ENCODE measurements at regions of chr2 and their contacts with region 1.

Region 1: DNA sequence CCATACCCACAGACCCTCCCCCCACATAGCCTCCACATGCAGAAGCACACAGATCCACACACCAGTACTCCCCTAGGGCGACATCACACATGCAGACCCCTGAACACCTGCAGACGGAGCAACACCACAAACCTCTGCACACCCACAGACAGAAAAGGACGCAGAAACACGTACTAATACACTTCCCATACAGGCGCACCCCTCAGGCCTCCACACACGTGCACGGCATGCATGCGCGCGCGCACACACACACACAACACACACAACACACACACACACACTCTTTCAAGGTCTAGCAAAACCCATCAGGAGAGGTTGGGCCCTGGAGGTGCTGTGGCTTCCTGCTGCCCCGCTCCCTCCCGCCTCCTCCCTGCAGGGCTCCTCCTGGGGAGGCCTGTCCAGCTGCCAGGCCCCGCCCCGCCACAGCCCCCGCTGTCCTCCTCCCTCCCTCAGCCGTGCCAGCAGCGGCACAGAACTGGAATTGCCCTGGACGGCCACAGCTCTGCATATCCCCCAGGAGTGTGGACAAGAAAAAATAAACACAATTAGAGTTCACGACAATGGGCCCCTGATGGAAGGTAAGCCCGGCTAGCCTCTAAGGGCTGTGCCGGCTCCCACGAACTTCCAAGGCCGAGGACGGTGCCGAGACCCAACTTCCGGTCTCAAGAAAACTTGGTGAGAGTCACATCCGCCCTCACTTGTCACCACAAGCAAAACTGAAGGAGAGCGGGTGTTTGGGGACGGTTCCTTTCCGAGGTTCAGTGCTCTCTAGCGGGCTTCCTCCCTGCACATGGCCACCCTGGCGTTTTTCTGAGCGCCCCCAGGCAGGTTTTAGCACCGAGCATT is 6.8 kb downstream of the ZFP36L2 start:
- DNase-seq: peak; percentile 95
- H3K4me3 ChIP-seq: peak overlapping the region in 3 of 4 donors; percentile 85 to 91 (median 90)
- H3K27ac ChIP-seq: peak overlapping the region; percentile 96 to 100 (median 99)
- H3K4me1 ChIP-seq: peaks cover 17 to 54% (median 47%) of the 10 kb centered on the region in 4 donors
- H3K27me3 ChIP-seq: no peaks in the 10 kb centered on the region
- CTCF ChIP-seq: no peak
- EP300 ChIP-seq: peak; percentile 33
- POLR2A ChIP-seq: peak; percentile 90

Region 2: GRCh38 chr2:43024515-43025011 is 195.0 kb before region 1 on chr2:
- in situ Hi-C with region 1: loop called in 1 of 4 experiments (anchors 10 kb)
- intact Hi-C with region 1: loop called (anchors 5 kb)
- DNase-seq: peak; percentile 83
- H3K4me3 ChIP-seq: no peak overlapping the region
- H3K27ac ChIP-seq: peak overlapping the region; percentile 7 to 54 (median 31)
- H3K4me1 ChIP-seq: peaks cover 4 to 35% (median 17%) of the 10 kb centered on the region in 4 donors
- H3K27me3 ChIP-seq: no peaks in the 10 kb centered on the region
- CTCF ChIP-seq: peak; percentile 77 to 86 (median 81)
- EP300 ChIP-seq: no peak
- POLR2A ChIP-seq: no peak

Region 3: GRCh38 chr2:43169987-43170386 is 49.6 kb before region 1 on chr2:
- in situ Hi-C with region 1: loop called in 2 of 4 experiments (anchors 5 to 10 kb)
- intact Hi-C with region 1: no loop called
- DNase-seq: peak; percentile 85
- H3K4me3 ChIP-seq: peak overlapping the region in 1 of 4 donors; percentile 19
- H3K27ac ChIP-seq: peak overlapping the region; percentile 88 to 96 (median 94)
- H3K4me1 ChIP-seq: peaks cover 30 to 71% (median 41%) of the 10 kb centered on the region in 4 donors
- H3K27me3 ChIP-seq: no peaks in the 10 kb centered on the region
- CTCF ChIP-seq: peak; percentile 62 to 95 (median 79)
- EP300 ChIP-seq: no peak
- POLR2A ChIP-seq: no peak

Region 4: DNA sequence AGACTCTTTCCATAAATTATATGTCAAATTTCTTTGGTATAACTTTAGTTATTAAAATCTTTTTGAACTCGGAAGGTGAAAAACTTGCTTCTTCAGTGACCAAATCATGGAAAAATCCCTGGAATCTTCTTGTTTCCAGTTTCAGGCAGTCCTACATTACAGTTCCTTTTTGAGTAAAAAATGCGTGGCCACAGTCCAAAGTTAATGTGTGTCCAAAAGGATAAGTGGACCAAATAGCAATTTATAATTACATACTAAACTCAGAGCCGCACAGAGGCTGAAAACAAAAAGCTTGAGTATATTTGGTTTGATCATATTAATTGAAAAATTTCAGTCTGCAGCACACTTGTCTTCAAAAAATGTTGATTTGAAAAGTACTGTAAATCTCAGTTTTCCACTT is 525.9 kb after region 1 on chr2:
- in situ Hi-C with region 1: no loop called
- intact Hi-C with region 1: no loop called
- DNase-seq: no peak
- H3K4me3 ChIP-seq: no peak overlapping the region
- H3K27ac ChIP-seq: peak overlapping the region in 2 of 4 donors; percentile 18 to 40
- H3K4me1 ChIP-seq: peaks cover 0 to 5% (median 2%) of the 10 kb centered on the region in 4 donors
- H3K27me3 ChIP-seq: no peaks in the 10 kb centered on the region
- CTCF ChIP-seq: no peak
- EP300 ChIP-seq: no peak
- POLR2A ChIP-seq: no peak

Region 5: GRCh38 chr2:45067859-45068570 is 1848.4 kb after region 1 on chr2:
- in situ Hi-C with region 1: no loop called
- intact Hi-C with region 1: no loop called
- DNase-seq: no peak
- H3K4me3 ChIP-seq: no peak overlapping the region
- H3K27ac ChIP-seq: no peak overlapping the region
- H3K4me1 ChIP-seq: no peaks in the 10 kb centered on the region
- H3K27me3 ChIP-seq: peaks cover 11% of the 10 kb centered on the region
- CTCF ChIP-seq: no peak
- EP300 ChIP-seq: no peak
- POLR2A ChIP-seq: no peak